ENCODE measurements at regions of chr17 and their contacts with region 1.

Region 1: GRCh38 chr17:40598663-40599467 is 33.6 kb upstream of the CCR7 start:
- DNase-seq: peak in 13 of 14 experiments; percentile 38 to 94 (median 65)
- ATAC-seq: peak; percentile 47
- H3K4me3 ChIP-seq: peak overlapping the region; percentile 24
- H3K4me3 Mint-ChIP-seq: peak overlapping the region; percentile 71
- H3K27ac ChIP-seq: peak overlapping the region; percentile 95 to 99
- H3K27ac Mint-ChIP-seq: peak overlapping the region; percentile 98
- H3K4me1 ChIP-seq: peaks cover 78% of the 10 kb centered on the region
- H3K4me1 Mint-ChIP-seq: peaks cover 95% of the 10 kb centered on the region
- H3K27me3 ChIP-seq: no peaks in the 10 kb centered on the region
- H3K27me3 Mint-ChIP-seq: no peaks in the 10 kb centered on the region
- CTCF ChIP-seq: no peak

Region 2: GRCh38 chr17:39001703-39002637 is 1596.9 kb before region 1 on chr17:
- CTCF ChIA-PET with region 1: no interaction called
- POLR2A ChIA-PET with region 1: no interaction called
- intact Hi-C with region 1: no loop called
- DNase-seq: peak in 2 of 14 experiments; percentile 29 to 48
- ATAC-seq: no peak
- H3K4me3 ChIP-seq: no peak overlapping the region
- H3K4me3 Mint-ChIP-seq: no peak overlapping the region
- H3K27ac ChIP-seq: no peak overlapping the region
- H3K27ac Mint-ChIP-seq: peak overlapping the region; percentile 22
- H3K4me1 ChIP-seq: peaks cover 21% of the 10 kb centered on the region
- H3K4me1 Mint-ChIP-seq: peaks cover 33% of the 10 kb centered on the region
- H3K27me3 ChIP-seq: no peaks in the 10 kb centered on the region
- H3K27me3 Mint-ChIP-seq: no peaks in the 10 kb centered on the region
- CTCF ChIP-seq: no peak

Region 3: GRCh38 chr17:40479533-40480480 is 119.1 kb before region 1 on chr17:
- CTCF ChIA-PET with region 1: no interaction called
- POLR2A ChIA-PET with region 1: no interaction called
- intact Hi-C with region 1: no loop called
- DNase-seq: no peak
- ATAC-seq: no peak
- H3K4me3 ChIP-seq: peak overlapping the region; percentile 3
- H3K4me3 Mint-ChIP-seq: no peak overlapping the region
- H3K27ac ChIP-seq: peak overlapping the region; percentile 63 to 83
- H3K27ac Mint-ChIP-seq: peak overlapping the region; percentile 97
- H3K4me1 ChIP-seq: peaks cover 79% of the 10 kb centered on the region
- H3K4me1 Mint-ChIP-seq: peaks cover 60% of the 10 kb centered on the region
- H3K27me3 ChIP-seq: no peaks in the 10 kb centered on the region
- H3K27me3 Mint-ChIP-seq: no peaks in the 10 kb centered on the region
- CTCF ChIP-seq: no peak

Region 4: GRCh38 chr17:40526668-40527067 is 72.2 kb before region 1 on chr17:
- CTCF ChIA-PET with region 1: no interaction called
- POLR2A ChIA-PET with region 1: no interaction called
- intact Hi-C with region 1: no loop called
- DNase-seq: peak in 1 of 14 experiments; percentile 10
- ATAC-seq: no peak
- H3K4me3 ChIP-seq: no peak overlapping the region
- H3K4me3 Mint-ChIP-seq: no peak overlapping the region
- H3K27ac ChIP-seq: no peak overlapping the region
- H3K27ac Mint-ChIP-seq: no peak overlapping the region
- H3K4me1 ChIP-seq: peaks cover 47% of the 10 kb centered on the region
- H3K4me1 Mint-ChIP-seq: peaks cover 36% of the 10 kb centered on the region
- H3K27me3 ChIP-seq: no peaks in the 10 kb centered on the region
- H3K27me3 Mint-ChIP-seq: no peaks in the 10 kb centered on the region
- CTCF ChIP-seq: no peak

Region 5: GRCh38 chr17:40551879-40552768 is 46.7 kb before region 1 on chr17:
- CTCF ChIA-PET with region 1: interaction called, 5 read pairs
- POLR2A ChIA-PET with region 1: interaction called, 1,290 read pairs
- intact Hi-C with region 1: no loop called
- DNase-seq: peak in 6 of 14 experiments; percentile 39 to 76 (median 44)
- ATAC-seq: no peak
- H3K4me3 ChIP-seq: no peak overlapping the region
- H3K4me3 Mint-ChIP-seq: peak overlapping the region; percentile 55
- H3K27ac ChIP-seq: peak overlapping the region in 1 of 2 donors; percentile 100
- H3K27ac Mint-ChIP-seq: peak overlapping the region; percentile 92
- H3K4me1 ChIP-seq: peaks cover 99% of the 10 kb centered on the region
- H3K4me1 Mint-ChIP-seq: peaks cover 99% of the 10 kb centered on the region
- H3K27me3 ChIP-seq: no peaks in the 10 kb centered on the region
- H3K27me3 Mint-ChIP-seq: no peaks in the 10 kb centered on the region
- CTCF ChIP-seq: no peak

Region 6: DNA sequence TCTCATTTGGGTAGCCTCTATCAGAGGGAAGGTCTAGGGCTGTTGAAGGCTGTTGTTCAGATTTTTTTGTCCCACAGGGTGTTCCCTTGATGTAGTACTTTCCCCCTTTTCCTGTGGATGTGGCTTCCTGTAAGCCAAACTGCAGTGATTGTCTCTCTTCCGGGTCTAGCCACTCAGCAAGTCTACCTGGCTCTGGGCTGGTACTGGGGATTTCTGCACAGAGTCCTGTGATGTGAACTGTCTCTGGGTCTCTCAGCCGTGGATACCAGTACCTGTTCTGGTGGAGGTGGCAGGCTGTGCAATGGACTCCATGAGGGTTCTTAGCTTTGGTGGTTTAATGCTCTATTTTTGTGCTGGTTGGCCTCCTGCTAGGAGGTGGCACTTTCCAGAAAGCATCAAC is 10.3 kb before region 1 on chr17:
- CTCF ChIA-PET with region 1: interaction called, 4 read pairs
- POLR2A ChIA-PET with region 1: interaction called, 168 read pairs
- intact Hi-C with region 1: no loop called
- DNase-seq: peak in 4 of 14 experiments; percentile 45 to 64 (median 57)
- ATAC-seq: no peak
- H3K4me3 ChIP-seq: no peak overlapping the region
- H3K4me3 Mint-ChIP-seq: peak overlapping the region; percentile 62
- H3K27ac ChIP-seq: peak overlapping the region in 1 of 2 donors; percentile 4
- H3K27ac Mint-ChIP-seq: peak overlapping the region; percentile 97
- H3K4me1 ChIP-seq: peaks cover 23% of the 10 kb centered on the region
- H3K4me1 Mint-ChIP-seq: peaks cover 86% of the 10 kb centered on the region
- H3K27me3 ChIP-seq: no peaks in the 10 kb centered on the region
- H3K27me3 Mint-ChIP-seq: no peaks in the 10 kb centered on the region
- CTCF ChIP-seq: no peak

Region 7: GRCh38 chr17:40659911-40660310 is 61.0 kb after region 1 on chr17:
- CTCF ChIA-PET with region 1: no interaction called
- POLR2A ChIA-PET with region 1: no interaction called
- intact Hi-C with region 1: no loop called
- DNase-seq: peak in 6 of 14 experiments; percentile 4 to 45 (median 24)
- ATAC-seq: peak; percentile 80
- H3K4me3 ChIP-seq: no peak overlapping the region
- H3K4me3 Mint-ChIP-seq: no peak overlapping the region
- H3K27ac ChIP-seq: no peak overlapping the region
- H3K27ac Mint-ChIP-seq: no peak overlapping the region
- H3K4me1 ChIP-seq: peaks cover 5% of the 10 kb centered on the region
- H3K4me1 Mint-ChIP-seq: peaks cover 10% of the 10 kb centered on the region
- H3K27me3 ChIP-seq: peaks cover 3 to 12% of the 10 kb centered on the region in 2 experiments
- H3K27me3 Mint-ChIP-seq: peaks cover 30% of the 10 kb centered on the region
- CTCF ChIP-seq: no peak

Measured in CD4-positive, alpha-beta T cell (primary cell).